ENCODE measurements at regions of chr11 and their contacts with region 1.

Region 1: GRCh38 chr11:20609727-20610707 is 10.6 kb downstream of the SLC6A5 start:
- DNase-seq: peak; percentile 73
- H3K4me3 ChIP-seq: peak overlapping the region; percentile 24
- H3K27ac ChIP-seq: no peak overlapping the region
- H3K4me1 ChIP-seq: peaks cover 9% of the 10 kb centered on the region
- H3K27me3 ChIP-seq: peaks cover 96% of the 10 kb centered on the region
- CTCF ChIP-seq: peak; percentile 95

Region 2: DNA sequence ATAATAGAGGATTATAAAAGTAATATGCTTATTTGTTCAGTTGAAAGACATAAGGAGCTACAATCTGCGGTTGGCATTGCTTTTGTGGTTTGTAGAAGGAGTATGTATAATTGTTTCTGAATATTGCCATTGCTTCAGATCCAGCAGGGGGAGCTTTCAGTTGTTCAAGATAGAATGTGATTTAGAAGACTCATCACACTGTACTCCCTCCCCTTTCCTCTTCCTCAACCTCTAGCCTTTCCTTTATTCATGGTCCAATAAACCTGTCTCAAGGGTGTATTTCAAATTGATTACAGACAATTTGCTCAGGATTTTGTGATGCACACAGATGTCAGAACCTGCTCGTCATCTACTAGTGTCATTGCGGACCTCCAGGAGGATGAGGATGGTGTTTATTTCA is 212.7 kb before region 1 on chr11:
- intact Hi-C with region 1: loop called (anchors 10 kb)
- DNase-seq: no peak
- H3K4me3 ChIP-seq: no peak overlapping the region
- H3K27ac ChIP-seq: no peak overlapping the region
- H3K4me1 ChIP-seq: no peaks in the 10 kb centered on the region
- H3K27me3 ChIP-seq: no peaks in the 10 kb centered on the region
- CTCF ChIP-seq: peak; percentile 59

Measured in left ventricle myocardium inferior (tissue), 1 donor.